GM23248 (cell line): ENCODE measurements at regions of chr2 and their contacts with region 1.

Region 1: DNA sequence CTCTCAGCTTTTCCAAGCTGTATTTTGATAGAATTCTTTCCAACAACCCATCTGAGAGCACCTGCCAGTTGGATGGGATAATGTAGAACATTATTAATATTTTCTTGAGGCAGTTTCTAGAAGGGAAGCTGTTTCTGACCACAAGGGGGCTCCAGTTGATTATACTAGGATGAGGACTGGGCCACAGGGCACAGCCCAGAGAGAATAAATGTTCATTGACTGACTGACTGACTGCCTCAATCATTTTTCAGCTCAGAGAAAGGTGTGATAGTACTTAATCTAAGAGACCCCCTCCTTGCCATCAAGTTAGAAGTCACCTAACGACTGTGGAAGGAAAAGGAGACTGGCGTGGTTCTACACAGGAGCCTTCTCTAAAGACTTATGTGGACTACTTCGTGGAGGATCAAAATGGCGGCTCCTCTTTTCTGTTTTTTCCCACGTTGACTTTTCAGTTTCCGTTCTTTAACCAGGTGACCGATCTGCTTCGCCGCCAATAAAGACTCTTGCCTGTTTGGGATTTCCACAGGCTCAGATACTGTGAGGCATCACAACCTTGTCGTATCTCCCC is 31.9 kb upstream of the CREG2 start:
- DNase-seq: peak; percentile 82
- H3K4me3 ChIP-seq: no peak overlapping the region
- H3K27ac ChIP-seq: no peak overlapping the region
- H3K4me1 ChIP-seq: peaks cover 6% of the 10 kb centered on the region; the same call in 1 of the 2 replicates
- H3K27me3 ChIP-seq: no peaks in the 10 kb centered on the region

Region 2: GRCh38 chr2:101697124-101698013 is 278.2 kb after region 1 on chr2 and contains the start of gene MAP4K4:
- in situ Hi-C with region 1: loop called (anchors 10 kb)
- DNase-seq: peak; percentile 91
- H3K4me3 ChIP-seq: peak within 1 kb of the TSS; percentile 96
- H3K27ac ChIP-seq: peak within 1 kb of the TSS; percentile 65
- H3K4me1 ChIP-seq: peaks cover 16% of the 10 kb centered on the region
- H3K27me3 ChIP-seq: no peaks in the 10 kb centered on the region
- total RNA-seq, gene MAP4K4: 107 and 115 TPM in 2 replicates

Region 3: DNA sequence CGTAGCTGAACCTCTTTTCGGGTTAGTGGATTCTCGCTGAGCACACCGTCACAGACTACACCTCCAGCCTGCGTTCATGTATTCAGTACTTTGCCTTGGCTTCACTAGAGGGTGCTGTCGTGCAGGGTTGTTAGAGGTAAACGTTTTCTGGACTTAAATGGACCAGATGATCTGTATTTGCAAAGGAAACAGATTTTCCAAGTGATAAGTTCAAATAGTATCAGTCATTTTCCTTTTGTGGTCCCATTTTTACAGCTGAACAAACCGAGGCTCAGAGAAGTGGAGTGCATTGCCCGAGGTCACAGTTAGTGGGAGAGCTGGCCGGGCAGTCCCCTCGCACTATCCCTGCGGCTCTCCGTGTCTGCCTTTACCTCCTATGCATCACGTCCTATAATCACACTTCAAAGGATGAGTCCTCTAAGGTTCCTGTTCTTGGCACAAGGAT is 404.2 kb after region 1 on chr2:
- in situ Hi-C with region 1: no loop called
- DNase-seq: peak; percentile 79
- H3K4me3 ChIP-seq: peak overlapping the region; percentile 44
- H3K27ac ChIP-seq: peak overlapping the region; percentile 82
- H3K4me1 ChIP-seq: peaks cover 97% of the 10 kb centered on the region
- H3K27me3 ChIP-seq: no peaks in the 10 kb centered on the region

Region 4: GRCh38 chr2:101844055-101844635 is 425.0 kb after region 1 on chr2:
- in situ Hi-C with region 1: loop called (anchors 10 kb)
- DNase-seq: peak; percentile 87
- H3K4me3 ChIP-seq: 0 out of 2 replicates have a peak overlapping the region, but pooled peaks have one; percentile 5
- H3K27ac ChIP-seq: peak overlapping the region; percentile 65
- H3K4me1 ChIP-seq: peaks cover 33% of the 10 kb centered on the region
- H3K27me3 ChIP-seq: no peaks in the 10 kb centered on the region